ENCODE measurements at regions of chr1 and their contacts with region 1.

Region 1: DNA sequence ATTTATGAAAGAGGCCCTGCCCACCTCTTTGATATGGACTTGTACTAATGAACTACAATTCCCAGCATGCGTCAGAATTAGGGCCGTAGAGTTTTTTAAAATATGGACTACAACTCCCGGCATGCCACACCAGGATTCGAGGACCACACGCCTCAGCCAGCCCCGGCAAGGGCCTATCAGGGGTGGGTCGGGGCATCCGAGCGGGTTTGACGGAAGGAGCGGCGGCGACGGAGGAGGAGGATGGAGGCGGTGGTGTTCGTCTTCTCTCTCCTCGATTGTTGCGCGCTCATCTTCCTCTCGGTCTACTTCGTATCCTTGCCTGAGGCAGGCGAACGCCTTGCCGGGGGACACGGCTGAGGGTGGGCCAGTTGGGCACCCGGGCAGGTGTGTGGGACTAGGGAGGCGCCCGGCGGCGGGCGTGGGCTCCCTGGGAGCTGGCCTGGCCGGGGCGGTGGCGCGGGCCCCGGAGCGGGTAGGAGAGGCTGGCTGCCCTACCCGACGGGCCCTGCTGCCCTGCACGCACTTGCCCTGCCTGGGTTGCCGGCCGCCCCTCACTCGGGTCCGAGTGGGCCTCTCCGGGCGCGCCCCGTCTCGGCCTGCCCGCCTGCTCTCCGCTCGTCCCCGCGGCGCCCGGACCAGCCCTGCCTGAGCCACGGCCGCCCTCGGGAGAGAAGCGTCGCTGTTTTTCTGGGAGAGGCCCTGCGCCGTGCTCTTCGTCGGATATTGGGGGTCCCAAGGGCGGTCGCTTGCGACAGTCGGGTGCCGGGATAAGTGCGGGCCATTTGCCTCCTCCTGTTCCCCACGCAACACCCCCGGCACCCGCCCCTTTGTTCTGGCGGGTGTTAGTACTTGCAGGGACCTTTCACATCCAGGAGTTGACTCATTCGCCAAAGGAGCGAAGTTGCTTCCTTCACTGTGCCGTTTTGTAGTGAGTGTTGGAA is at the start of gene CNIH4:
- DNase-seq: peak; percentile 81 to 98 (median 94)

Region 2: DNA sequence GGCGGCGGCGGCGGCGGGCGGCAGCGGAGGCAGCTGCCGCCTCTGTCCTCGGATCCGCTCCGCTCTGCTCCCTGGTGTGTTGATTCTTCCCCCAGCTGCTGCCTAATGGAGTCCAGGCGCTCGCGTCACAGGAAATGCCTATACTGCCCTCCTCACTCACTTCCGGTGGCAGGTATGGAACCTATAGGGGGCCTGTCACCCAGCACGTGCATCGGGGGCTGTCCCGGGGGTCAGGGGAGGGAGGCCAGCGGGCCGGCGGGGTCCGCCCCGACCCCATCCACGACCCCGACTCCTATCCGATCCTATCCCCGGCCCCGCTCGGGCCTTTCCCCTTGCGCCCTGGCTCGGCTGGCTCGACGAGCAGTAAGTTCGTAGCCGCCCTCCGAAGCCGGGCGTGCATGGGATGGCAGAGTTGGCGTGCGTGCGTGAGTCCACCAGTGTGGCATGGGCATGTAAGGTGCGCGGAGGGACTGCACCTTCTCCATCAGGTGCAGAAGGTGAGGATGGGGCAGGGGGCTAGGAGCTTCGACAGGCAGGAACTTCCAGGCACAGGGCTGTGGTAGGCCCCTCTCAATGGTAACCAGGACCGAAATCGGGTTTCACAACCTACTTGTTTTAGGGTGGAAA is 77.8 kb after region 1 on chr1 and contains the start of gene WDR26:
- intact Hi-C with region 1: loop called (anchors 10 kb)
- DNase-seq: peak; percentile 79 to 95 (median 88)